WTC11 (cell line): ENCODE measurements at regions of chr7 and their contacts with region 1.

Region 1: DNA sequence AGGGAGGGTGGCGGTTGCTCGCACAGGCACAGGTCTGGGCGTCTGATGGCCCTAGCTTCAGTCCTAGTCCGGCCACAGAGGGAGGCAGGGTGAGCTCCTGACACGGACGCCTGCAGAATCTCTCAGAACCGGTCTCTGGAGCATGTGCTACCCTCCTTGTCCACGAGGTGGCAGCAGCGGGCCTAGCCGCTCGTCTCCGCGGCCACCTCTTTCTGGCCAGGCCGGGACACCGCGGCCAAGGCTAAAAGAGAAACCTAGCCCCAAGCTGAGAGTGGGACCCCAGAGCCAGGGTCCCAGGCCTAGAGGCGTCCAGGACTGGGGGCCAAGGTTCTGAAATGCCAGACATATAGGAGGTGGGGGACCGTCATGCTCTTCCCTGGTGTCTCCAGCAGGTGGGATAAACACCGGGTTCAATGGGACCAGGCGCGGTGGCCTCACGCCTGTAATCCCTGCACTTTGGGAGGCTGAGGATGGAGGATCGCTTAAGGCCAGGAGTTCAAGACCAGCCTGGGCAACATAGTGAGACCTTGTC is 3.2 kb upstream of the LAT2 start:
- DNase-seq: peak; percentile 95
- ATAC-seq: peak; percentile 91
- H3K4me3 Mint-ChIP-seq: no peak overlapping the region
- H3K27ac Mint-ChIP-seq: no peak overlapping the region
- H3K4me1 Mint-ChIP-seq: no peaks in the 10 kb centered on the region
- H3K27me3 Mint-ChIP-seq: no peaks in the 10 kb centered on the region; the same call in 1 of the 2 replicates
- CTCF ChIP-seq: peak; percentile 98

Region 2: DNA sequence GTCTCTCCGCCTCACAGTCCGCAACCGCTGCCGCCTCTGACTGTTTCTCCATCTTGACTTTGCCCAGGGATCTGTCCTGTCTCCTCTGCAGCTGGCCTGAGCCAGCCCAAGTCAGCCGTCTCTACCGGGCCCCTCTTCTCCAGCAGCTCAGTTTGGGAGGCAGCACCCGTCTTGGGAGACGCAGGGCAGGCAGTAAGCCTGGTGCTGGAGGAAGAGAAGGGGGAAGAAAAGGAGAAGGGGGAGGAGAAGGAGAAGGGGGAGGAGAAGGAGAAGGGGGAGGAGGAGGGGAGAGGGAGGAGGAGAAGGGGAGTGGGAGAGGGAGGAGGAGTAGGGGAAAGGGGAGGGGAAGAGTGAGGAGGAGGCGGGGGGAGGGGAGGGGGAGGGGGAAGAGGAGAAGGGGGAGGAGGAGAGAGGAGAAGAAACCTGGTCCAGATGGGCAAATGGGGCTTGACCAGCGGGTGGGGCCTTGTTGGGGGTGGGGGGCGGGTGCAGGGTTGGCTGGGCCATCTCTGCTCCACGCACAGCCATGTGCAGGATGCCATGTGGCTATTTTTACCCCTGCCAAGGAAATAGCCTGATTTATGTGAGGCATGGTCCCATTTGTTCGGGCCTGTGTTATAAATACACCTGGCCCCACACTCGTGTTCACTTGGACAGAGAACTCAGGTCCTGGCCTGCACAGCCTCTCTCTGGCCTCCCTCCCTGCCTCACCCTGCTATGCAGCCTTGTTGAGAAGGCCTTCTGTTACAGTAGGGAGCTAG is 809.0 kb before region 1 on chr7:
- CTCF ChIA-PET with region 1: no interaction called
- POLR2A ChIA-PET with region 1: no interaction called
- DNase-seq: peak; percentile 38
- ATAC-seq: peak; percentile 79
- H3K4me3 Mint-ChIP-seq: peak overlapping the region; percentile 73
- H3K27ac Mint-ChIP-seq: peak overlapping the region; percentile 51
- H3K4me1 Mint-ChIP-seq: peaks cover 19% of the 10 kb centered on the region
- H3K27me3 Mint-ChIP-seq: peaks cover 4% of the 10 kb centered on the region
- CTCF ChIP-seq: no peak

Region 3: GRCh38 chr7:73496626-73497025 is 710.0 kb before region 1 on chr7:
- CTCF ChIA-PET with region 1: no interaction called
- POLR2A ChIA-PET with region 1: no interaction called
- DNase-seq: no peak
- ATAC-seq: no peak
- H3K4me3 Mint-ChIP-seq: no peak overlapping the region
- H3K27ac Mint-ChIP-seq: no peak overlapping the region
- H3K4me1 Mint-ChIP-seq: no peaks in the 10 kb centered on the region
- H3K27me3 Mint-ChIP-seq: no peaks in the 10 kb centered on the region
- CTCF ChIP-seq: no peak

Region 4: GRCh38 chr7:73879977-73880681 is 326.5 kb before region 1 on chr7:
- CTCF ChIA-PET with region 1: no interaction called
- POLR2A ChIA-PET with region 1: no interaction called
- DNase-seq: no peak
- ATAC-seq: no peak
- H3K4me3 Mint-ChIP-seq: no peak overlapping the region
- H3K27ac Mint-ChIP-seq: no peak overlapping the region
- H3K4me1 Mint-ChIP-seq: no peaks in the 10 kb centered on the region
- H3K27me3 Mint-ChIP-seq: no peaks in the 10 kb centered on the region
- CTCF ChIP-seq: no peak

Region 5: GRCh38 chr7:74068393-74069085 is 138.1 kb before region 1 on chr7:
- CTCF ChIA-PET with region 1: interaction called, 38 read pairs
- POLR2A ChIA-PET with region 1: no interaction called
- DNase-seq: no peak
- ATAC-seq: no peak
- H3K4me3 Mint-ChIP-seq: no peak overlapping the region
- H3K27ac Mint-ChIP-seq: no peak overlapping the region
- H3K4me1 Mint-ChIP-seq: 0 out of 2 replicates have a peak, but pooled peaks cover 2% of the 10 kb centered on the region
- H3K27me3 Mint-ChIP-seq: no peaks in the 10 kb centered on the region; the same call in 1 of the 2 replicates
- CTCF ChIP-seq: no peak

Region 6: GRCh38 chr7:74155792-74156395 is 50.8 kb before region 1 on chr7:
- CTCF ChIA-PET with region 1: no interaction called
- POLR2A ChIA-PET with region 1: no interaction called
- DNase-seq: no peak
- ATAC-seq: no peak
- H3K4me3 Mint-ChIP-seq: no peak overlapping the region
- H3K27ac Mint-ChIP-seq: peak overlapping the region; percentile 49; the same call in 1 of the 2 replicates
- H3K4me1 Mint-ChIP-seq: no peaks in the 10 kb centered on the region; the same call in 1 of the 2 replicates
- H3K27me3 Mint-ChIP-seq: no peaks in the 10 kb centered on the region
- CTCF ChIP-seq: no peak

Region 7: DNA sequence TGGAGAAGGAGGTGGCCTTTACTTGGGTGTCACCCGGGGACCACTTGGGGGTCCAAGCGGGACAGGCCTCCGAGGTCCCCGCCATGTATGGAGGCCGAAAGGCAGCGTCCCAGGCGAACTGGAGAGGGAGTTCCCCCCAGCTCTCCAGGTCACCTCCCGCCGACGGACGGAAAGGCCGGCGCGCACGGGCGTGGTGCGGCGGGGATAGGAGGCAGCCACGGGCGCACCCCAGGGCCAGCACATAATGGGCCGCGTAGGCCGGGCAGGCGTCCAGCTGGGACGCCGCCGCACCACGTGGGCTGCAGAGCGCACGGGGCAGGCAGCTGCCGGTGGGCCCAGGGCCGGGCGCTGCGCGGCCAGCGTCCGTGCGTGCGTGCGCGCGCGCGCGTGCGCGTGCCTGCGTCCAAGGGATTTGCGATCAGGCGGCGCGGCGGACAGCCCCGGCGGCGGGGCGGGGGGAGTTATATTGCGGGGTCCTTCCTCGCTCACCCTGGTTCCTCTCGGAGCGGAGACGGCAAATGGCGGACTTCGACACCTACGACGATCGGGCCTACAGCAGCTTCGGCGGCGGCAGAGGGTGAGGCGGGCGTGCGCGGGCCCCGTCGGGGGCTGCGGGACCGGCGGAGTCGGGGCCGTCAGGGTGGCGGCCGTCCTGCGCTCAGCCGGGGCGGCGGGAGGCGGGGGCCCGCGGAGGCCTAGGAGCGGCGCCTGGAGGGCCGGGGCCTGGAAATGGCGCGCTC is 32.6 kb before region 1 on chr7 and contains the start of gene EIF4H:
- CTCF ChIA-PET with region 1: interaction called, 14 read pairs
- POLR2A ChIA-PET with region 1: no interaction called
- DNase-seq: peak; percentile 93
- ATAC-seq: peak; percentile 82
- H3K4me3 Mint-ChIP-seq: peak within 1 kb of the TSS; percentile 92
- H3K27ac Mint-ChIP-seq: peak within 1 kb of the TSS; percentile 93
- H3K4me1 Mint-ChIP-seq: peaks cover 47% of the 10 kb centered on the region
- H3K27me3 Mint-ChIP-seq: no peaks in the 10 kb centered on the region
- CTCF ChIP-seq: no peak
- total RNA-seq, gene EIF4H: 355 to 373 TPM (median 371 TPM) in 3 replicates

Region 8: DNA sequence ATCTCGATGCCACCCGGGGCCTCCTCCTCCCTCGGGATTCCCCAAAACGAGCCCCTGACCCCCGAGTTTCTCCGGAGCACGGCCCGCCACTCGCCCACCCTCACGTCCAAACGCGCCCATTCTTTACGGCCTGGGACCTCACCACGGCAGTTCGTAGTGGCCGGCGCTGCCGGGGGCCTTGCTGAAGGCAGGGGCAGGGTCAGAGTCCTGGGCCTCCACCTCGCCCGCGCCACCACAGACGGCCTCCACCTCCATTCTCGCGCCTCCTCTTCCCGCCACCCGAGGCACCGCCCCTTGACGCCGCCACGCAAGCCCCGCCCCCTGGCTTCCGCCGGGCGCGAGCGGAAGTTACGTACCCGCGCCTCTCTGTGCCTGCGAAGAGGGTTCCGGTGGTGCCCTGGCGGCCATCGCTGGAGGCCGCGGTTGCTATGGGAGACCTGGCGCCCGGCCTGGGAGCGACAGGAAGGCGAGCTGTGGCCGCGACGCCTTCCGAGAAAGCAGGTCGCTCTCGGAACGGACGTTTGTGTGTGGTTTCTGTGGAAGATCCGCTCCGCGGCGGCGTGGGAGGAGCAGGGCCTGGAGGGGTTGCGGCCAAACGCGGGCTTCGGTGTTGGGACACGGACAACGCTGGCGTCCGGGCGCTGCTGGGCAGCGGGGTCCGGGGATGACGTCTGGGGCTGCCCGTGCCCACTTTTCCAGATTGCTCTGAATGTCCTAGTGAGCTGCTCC is 47.6 kb after region 1 on chr7 and contains the start of gene RFC2:
- CTCF ChIA-PET with region 1: interaction called, 10 read pairs
- POLR2A ChIA-PET with region 1: no interaction called
- DNase-seq: peak; percentile 97
- ATAC-seq: peak; percentile 96
- H3K4me3 Mint-ChIP-seq: peak within 1 kb of the TSS; percentile 94
- H3K27ac Mint-ChIP-seq: peak within 1 kb of the TSS; percentile 97
- H3K4me1 Mint-ChIP-seq: peaks cover 3% of the 10 kb centered on the region
- H3K27me3 Mint-ChIP-seq: no peaks in the 10 kb centered on the region
- CTCF ChIP-seq: no peak
- total RNA-seq, gene RFC2: 74.1 to 80.7 TPM (median 79.4 TPM) in 3 replicates

Region 9: DNA sequence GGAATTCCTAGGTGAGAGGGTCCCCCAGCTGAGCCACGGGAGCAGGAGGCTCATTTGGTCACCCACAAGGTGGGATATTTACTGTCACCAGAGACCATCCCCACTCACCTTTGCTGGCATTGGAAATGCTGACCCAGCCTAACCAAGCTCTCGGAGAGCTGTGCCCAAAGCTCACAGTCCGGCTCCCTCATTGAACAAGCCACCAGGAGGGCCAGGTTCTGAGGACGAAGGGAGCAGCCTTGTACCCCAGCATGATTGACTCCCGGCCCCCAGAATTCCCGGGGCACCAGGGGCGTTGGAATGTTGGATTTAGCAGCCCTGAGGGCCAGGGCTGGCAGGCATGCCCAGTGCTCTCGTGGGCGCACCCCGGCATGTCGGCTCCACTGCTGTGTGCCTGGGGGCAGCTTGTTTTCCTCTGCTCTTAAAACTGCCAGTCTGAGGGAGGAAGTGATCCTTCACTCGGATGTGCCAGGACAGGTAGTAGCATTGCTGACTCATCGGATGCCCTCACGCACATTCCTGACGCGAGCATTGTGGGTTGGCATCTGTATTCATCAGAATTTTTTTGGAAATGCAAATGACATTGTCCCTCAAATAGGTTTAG is 105.9 kb after region 1 on chr7:
- CTCF ChIA-PET with region 1: interaction called, 11 read pairs
- POLR2A ChIA-PET with region 1: no interaction called
- DNase-seq: no peak
- ATAC-seq: no peak
- H3K4me3 Mint-ChIP-seq: no peak overlapping the region
- H3K27ac Mint-ChIP-seq: no peak overlapping the region
- H3K4me1 Mint-ChIP-seq: 0 out of 2 replicates have a peak, but pooled peaks cover 3% of the 10 kb centered on the region
- H3K27me3 Mint-ChIP-seq: no peaks in the 10 kb centered on the region
- CTCF ChIP-seq: no peak

Region 10: GRCh38 chr7:74395745-74396311 is 189.2 kb after region 1 on chr7:
- CTCF ChIA-PET with region 1: interaction called, 275 read pairs
- POLR2A ChIA-PET with region 1: no interaction called
- DNase-seq: no peak
- ATAC-seq: no peak
- H3K4me3 Mint-ChIP-seq: no peak overlapping the region
- H3K27ac Mint-ChIP-seq: no peak overlapping the region
- H3K4me1 Mint-ChIP-seq: peaks cover 11% of the 10 kb centered on the region
- H3K27me3 Mint-ChIP-seq: no peaks in the 10 kb centered on the region
- CTCF ChIP-seq: no peak